MCF 10A (cell line): ENCODE measurements at regions of chr1 and their contacts with region 1.

Region 1: DNA sequence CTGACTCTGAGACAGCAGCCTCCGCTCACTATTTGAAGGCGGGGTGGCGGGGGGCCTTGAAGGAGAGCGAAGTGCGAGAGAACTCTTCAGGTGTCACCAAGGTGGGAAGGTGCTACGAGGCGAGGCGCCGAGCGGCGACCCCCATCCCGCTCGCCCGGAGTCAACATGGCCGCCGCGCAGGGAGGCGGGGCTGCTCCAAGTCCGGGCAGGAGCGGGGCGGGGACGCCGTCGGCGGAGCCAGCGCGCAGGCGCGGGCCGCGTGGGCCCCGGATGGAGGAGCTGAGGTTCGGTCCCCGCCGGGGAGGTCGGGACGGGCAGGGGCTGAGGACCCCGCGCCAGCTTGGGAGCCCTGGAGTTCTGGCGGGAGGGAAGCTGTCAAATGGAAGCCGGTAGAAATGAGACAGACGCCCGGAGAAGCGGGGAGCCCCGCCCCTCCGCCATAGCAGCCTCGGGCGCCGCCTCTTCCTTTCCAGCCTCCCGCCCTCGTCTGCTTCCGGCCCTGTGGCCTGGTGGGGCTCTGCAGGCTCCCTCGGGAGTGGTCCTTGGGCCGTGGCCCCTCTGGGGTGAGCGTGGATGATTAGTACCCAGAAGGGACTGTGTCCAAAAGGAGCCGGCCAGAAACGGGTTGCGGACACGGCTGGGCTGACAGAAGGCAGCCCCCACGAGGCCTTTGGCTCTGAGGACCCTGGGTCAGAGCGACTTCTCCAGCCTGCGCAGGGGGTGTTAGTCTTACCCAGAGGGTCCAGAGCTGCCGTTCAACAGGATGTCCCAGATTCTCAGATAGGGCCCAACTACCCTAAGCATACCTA is at the start of gene PIGV:
- DNase-seq: peak; percentile 79
- H3K4me3 Mint-ChIP-seq: peak within 1 kb of the TSS; percentile 97
- H3K27ac Mint-ChIP-seq: peak within 1 kb of the TSS; percentile 100
- H3K4me1 Mint-ChIP-seq: peaks cover 44% of the 10 kb centered on the region
- H3K27me3 Mint-ChIP-seq: no peaks in the 10 kb centered on the region
- CTCF ChIP-seq: no peak
- total RNA-seq, gene PIGV: 13.3 and 14.7 TPM in 2 replicates

Region 2: GRCh38 chr1:26500488-26501175 is 287.3 kb before region 1 on chr1:
- CTCF ChIA-PET with region 1: interaction called, 6 read pairs
- POLR2A ChIA-PET with region 1: interaction called, 12 read pairs
- intact Hi-C with region 1: loop called (anchors 2 kb)
- DNase-seq: peak; percentile 86
- H3K4me3 Mint-ChIP-seq: peak overlapping the region; percentile 86
- H3K27ac Mint-ChIP-seq: peak overlapping the region; percentile 91
- H3K4me1 Mint-ChIP-seq: no peaks in the 10 kb centered on the region
- H3K27me3 Mint-ChIP-seq: no peaks in the 10 kb centered on the region
- CTCF ChIP-seq: no peak

Region 3: GRCh38 chr1:26602378-26602959 is 185.4 kb before region 1 on chr1:
- CTCF ChIA-PET with region 1: interaction called, 184 read pairs
- POLR2A ChIA-PET with region 1: interaction called, 55 read pairs
- intact Hi-C with region 1: loop called (anchors 1 kb)
- DNase-seq: peak; percentile 77
- H3K4me3 Mint-ChIP-seq: no peak overlapping the region
- H3K27ac Mint-ChIP-seq: no peak overlapping the region
- H3K4me1 Mint-ChIP-seq: no peaks in the 10 kb centered on the region
- H3K27me3 Mint-ChIP-seq: peaks cover 28% of the 10 kb centered on the region
- CTCF ChIP-seq: peak; percentile 77

Region 4: GRCh38 chr1:26705788-26706311 is 82.1 kb before region 1 on chr1:
- CTCF ChIA-PET with region 1: interaction called, 7 read pairs
- POLR2A ChIA-PET with region 1: interaction called, 44 read pairs
- intact Hi-C with region 1: no loop called
- DNase-seq: peak; percentile 57
- H3K4me3 Mint-ChIP-seq: peak overlapping the region; percentile 30
- H3K27ac Mint-ChIP-seq: peak overlapping the region; percentile 63
- H3K4me1 Mint-ChIP-seq: peaks cover 28% of the 10 kb centered on the region
- H3K27me3 Mint-ChIP-seq: no peaks in the 10 kb centered on the region
- CTCF ChIP-seq: no peak

Region 5: DNA sequence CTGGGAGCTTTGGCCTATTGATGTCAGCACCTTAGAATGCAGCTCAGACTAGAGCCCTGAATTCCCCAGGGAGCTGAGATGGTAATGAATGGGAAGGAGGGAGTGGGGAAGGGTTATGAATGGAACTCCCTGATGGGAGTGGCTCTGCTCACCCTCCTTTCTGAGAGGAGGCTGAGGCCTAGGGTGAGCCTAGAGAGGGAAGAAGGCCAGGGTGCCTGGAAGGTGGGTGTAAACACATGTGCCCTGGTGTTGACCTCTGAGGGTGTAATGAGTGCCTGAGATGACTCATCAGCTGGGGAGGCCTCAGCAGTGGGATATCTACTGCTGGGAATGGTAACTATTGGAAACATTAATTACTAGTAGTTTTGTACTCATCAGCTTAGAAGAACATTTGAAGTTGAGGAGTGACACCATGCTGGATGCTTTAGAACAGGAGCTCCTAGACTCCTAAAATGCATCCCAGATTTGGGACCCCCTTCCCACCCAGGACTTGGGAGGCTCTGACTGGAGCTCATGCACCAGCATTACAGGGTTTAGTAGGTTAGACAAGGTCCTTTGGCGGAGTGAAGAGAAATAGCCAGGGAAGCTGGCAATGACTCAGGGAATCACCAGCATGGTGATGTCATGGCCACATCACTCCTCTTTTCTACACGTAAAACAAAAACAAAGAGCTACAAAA is 16.1 kb before region 1 on chr1:
- CTCF ChIA-PET with region 1: interaction called, 8 read pairs
- POLR2A ChIA-PET with region 1: interaction called, 32 read pairs
- intact Hi-C with region 1: no loop called
- DNase-seq: peak; percentile 95
- H3K4me3 Mint-ChIP-seq: no peak overlapping the region
- H3K27ac Mint-ChIP-seq: no peak overlapping the region
- H3K4me1 Mint-ChIP-seq: peaks cover 38% of the 10 kb centered on the region
- H3K27me3 Mint-ChIP-seq: no peaks in the 10 kb centered on the region
- CTCF ChIP-seq: no peak

Region 6: DNA sequence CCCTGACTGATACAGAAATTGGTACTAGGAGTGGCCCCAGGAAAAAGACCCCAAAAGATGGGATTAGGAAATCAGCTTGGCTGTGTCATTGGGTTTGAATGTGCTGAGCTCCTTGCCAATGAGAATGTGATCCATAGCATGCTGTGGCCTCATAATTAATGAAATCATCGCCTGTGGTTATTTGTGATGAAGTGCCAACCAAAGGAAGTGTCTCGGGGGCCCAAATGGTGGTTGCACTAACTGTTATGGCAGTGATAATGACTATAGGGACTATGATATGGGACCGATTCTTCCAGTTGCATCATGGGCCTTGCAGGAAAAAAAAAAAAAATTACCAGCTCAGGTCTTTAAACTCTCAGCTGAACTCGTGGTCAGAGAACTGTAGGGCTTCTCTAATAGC is 23.1 kb after region 1 on chr1:
- CTCF ChIA-PET with region 1: interaction called, 24 read pairs
- POLR2A ChIA-PET with region 1: interaction called, 4 read pairs
- intact Hi-C with region 1: no loop called
- DNase-seq: no peak
- H3K4me3 Mint-ChIP-seq: no peak overlapping the region
- H3K27ac Mint-ChIP-seq: peak overlapping the region; percentile 39
- H3K4me1 Mint-ChIP-seq: peaks cover 6% of the 10 kb centered on the region
- H3K27me3 Mint-ChIP-seq: no peaks in the 10 kb centered on the region
- CTCF ChIP-seq: no peak

Region 7: GRCh38 chr1:26949926-26950319 is 162.0 kb after region 1 on chr1:
- CTCF ChIA-PET with region 1: no interaction called
- POLR2A ChIA-PET with region 1: no interaction called
- intact Hi-C with region 1: no loop called
- DNase-seq: peak; percentile 30
- H3K4me3 Mint-ChIP-seq: no peak overlapping the region
- H3K27ac Mint-ChIP-seq: peak overlapping the region; percentile 54
- H3K4me1 Mint-ChIP-seq: peaks cover 5% of the 10 kb centered on the region
- H3K27me3 Mint-ChIP-seq: no peaks in the 10 kb centered on the region
- CTCF ChIP-seq: no peak

Region 8: GRCh38 chr1:26986658-26987057 is 198.7 kb after region 1 on chr1:
- CTCF ChIA-PET with region 1: no interaction called
- POLR2A ChIA-PET with region 1: no interaction called
- intact Hi-C with region 1: no loop called
- DNase-seq: no peak
- H3K4me3 Mint-ChIP-seq: no peak overlapping the region
- H3K27ac Mint-ChIP-seq: no peak overlapping the region
- H3K4me1 Mint-ChIP-seq: peaks cover 12% of the 10 kb centered on the region
- H3K27me3 Mint-ChIP-seq: no peaks in the 10 kb centered on the region
- CTCF ChIP-seq: no peak